A549 (cell line): ENCODE measurements at regions of chr2 and their contacts with region 1.

Region 1: DNA sequence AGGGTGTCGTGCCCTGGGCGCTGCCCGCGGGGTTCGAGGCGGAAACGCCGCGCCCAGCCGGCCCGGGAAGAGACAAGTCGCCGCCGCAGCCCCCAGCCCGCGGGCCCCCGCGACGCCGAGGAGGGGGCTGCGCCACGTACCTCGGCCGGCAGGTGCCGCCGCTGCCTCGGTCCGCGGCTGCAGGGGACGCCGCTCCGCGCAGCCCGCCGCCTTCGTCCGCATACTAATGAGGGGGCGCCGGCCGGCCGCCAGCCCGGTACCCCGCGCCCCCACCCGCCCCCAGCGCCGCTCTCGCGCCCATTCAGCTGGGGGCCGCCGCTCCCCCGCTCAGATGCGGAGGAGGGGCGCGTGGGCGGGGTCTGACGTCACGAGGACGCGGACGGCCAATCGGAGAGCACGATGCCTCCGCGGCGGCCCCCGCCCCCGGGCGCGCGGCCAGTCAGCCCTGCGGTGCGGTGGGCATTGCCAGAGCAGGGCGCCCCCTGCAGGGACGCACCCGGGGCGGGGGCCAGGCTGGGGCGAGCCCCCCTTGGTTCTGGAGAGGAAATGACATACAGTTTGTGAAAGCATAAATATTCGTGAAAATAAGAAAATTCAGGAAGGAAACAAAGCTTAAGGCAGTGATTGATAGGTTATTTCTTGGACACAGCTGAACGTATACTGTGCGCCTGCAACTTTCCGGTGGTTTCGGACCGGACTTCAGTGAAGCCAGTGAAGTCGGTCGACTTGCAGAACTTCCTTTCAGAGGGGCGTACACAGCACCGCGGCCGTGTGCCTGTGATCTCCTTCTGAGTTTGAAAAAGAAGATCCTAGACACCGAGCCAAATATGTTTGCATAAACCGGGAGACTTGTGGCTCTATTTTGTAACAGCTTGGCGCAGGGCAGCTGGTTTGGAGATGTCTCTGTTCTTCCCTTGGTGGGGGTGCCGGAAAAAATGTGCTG is at the start of gene ST3GAL5:
- DNase-seq: peak; percentile 81 to 92
- ATAC-seq: peak; percentile 74 to 84
- H3K4me3 ChIP-seq: peak within 1 kb of the TSS; percentile 77
- H3K27ac ChIP-seq: peak within 1 kb of the TSS; percentile 88 to 97
- H3K4me1 ChIP-seq: peaks cover 67% of the 10 kb centered on the region
- CTCF ChIP-seq: peak; percentile 97
- EP300 ChIP-seq: peak in 1 of 2 experiments; percentile 28; a peak in 1 of 5 replicates
- POLR2A ChIP-seq: peak; percentile 22
- RAD21 ChIP-seq: peak; percentile 55 to 81
- polyA plus RNA-seq, gene ST3GAL5: 115 and 119 TPM in 2 replicates

Region 2: GRCh38 chr2:85420536-85421259 is 468.3 kb before region 1 on chr2:
- CTCF ChIA-PET with region 1: no interaction called
- POLR2A ChIA-PET with region 1: no interaction called
- DNase-seq: peak; percentile 92 to 97
- ATAC-seq: peak; percentile 57 to 70
- H3K4me3 ChIP-seq: peak overlapping the region; percentile 16; the same call in 1 of the 3 replicates
- H3K27ac ChIP-seq: peak overlapping the region; percentile 96 to 98
- H3K4me1 ChIP-seq: peaks cover 44% of the 10 kb centered on the region
- CTCF ChIP-seq: peak; percentile 99
- EP300 ChIP-seq: no peak
- POLR2A ChIP-seq: no peak
- RAD21 ChIP-seq: peak; percentile 100

Region 3: DNA sequence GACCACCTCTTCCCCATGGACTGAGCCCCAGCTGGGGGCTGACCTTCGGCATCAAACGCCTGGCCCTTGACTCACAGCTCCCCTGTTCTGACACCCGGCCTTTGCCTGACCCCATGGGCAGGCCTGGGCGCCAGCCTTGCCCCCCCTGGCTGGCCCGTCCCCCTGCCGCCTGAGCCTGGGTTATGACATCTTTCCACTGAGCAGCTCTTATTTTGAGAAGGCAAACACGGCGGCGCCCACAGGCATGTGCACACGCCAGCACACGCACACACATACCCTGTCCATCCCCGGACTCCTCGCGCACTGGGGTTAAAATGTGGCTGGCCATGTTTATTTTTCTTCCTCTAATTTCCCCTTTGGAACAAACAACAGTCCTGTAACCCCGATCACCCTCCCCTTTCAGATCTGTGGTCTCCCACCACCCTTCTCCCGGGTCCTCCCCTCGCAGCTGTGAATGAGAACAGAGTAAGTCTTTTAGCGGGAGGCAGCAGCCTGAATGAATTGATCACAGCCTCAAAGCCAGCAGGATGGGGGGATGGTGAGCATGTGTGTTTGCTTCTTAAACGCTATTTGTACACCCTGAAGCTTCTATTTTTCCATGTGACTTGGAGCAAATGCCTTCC is 147.0 kb before region 1 on chr2:
- CTCF ChIA-PET with region 1: interaction called, 10 read pairs
- POLR2A ChIA-PET with region 1: no interaction called
- DNase-seq: peak; percentile 73 to 92
- ATAC-seq: peak; percentile 81 to 86
- H3K4me3 ChIP-seq: peak overlapping the region; percentile 21; the same call in 2 of the 3 replicates
- H3K27ac ChIP-seq: peak overlapping the region; percentile 93 to 97
- H3K4me1 ChIP-seq: peaks cover 60% of the 10 kb centered on the region
- CTCF ChIP-seq: no peak
- EP300 ChIP-seq: peak; percentile 45 to 89; a peak in 3 of 5 replicates
- POLR2A ChIP-seq: no peak
- RAD21 ChIP-seq: peak in 1 of 2 experiments; percentile 43; a peak in 3 of 5 replicates

Region 4: GRCh38 chr2:85799215-85799956 is 89.6 kb before region 1 on chr2:
- CTCF ChIA-PET with region 1: no interaction called
- POLR2A ChIA-PET with region 1: no interaction called
- DNase-seq: peak; percentile 59 to 77
- ATAC-seq: peak; percentile 73 to 82
- H3K4me3 ChIP-seq: no peak overlapping the region
- H3K27ac ChIP-seq: peak overlapping the region; percentile 51 to 76
- H3K4me1 ChIP-seq: peaks cover 29% of the 10 kb centered on the region
- CTCF ChIP-seq: no peak
- EP300 ChIP-seq: no peak
- POLR2A ChIP-seq: no peak
- RAD21 ChIP-seq: no peak

Region 5: DNA sequence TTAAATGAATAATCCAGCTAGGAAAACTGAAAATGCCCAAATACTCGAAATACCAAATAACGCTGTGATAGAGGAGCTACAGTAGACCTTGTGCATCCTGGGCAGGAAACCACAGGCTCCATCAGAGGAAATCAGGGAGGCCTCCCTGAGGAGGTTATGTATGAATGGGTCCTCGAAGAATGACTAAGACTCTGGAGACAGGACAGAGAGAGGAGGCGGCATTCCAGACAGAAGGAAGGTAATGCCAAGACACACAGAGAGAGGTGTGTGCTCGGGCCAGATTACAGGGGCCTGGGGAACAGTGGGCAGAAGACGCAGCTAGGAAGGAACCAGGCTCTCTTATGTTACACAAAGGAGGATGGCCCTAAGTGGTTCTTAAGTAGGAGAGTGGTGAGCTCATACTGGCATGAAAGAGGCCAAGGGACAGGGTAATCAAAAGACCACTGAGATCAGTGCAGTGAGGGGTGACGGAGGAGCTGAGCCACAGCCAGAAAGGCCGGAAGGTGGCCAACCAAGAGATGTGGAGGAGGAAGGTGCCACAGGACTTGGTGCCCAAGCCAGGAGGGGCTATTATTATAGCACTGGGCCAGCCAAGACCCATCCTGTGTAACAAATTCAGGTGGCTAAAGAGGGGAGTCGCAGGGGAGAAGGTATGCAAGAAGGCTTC is 10.1 kb before region 1 on chr2:
- CTCF ChIA-PET with region 1: interaction called, 19 read pairs
- POLR2A ChIA-PET with region 1: no interaction called
- DNase-seq: no peak
- ATAC-seq: peak; percentile 34 to 61; a peak in 3 of 6 replicates
- H3K4me3 ChIP-seq: no peak overlapping the region
- H3K27ac ChIP-seq: peak overlapping the region in 1 of 2 experiments; percentile 9; a peak in 1 of 6 replicates
- H3K4me1 ChIP-seq: peaks cover 33% of the 10 kb centered on the region
- CTCF ChIP-seq: no peak
- EP300 ChIP-seq: no peak
- POLR2A ChIP-seq: no peak
- RAD21 ChIP-seq: no peak

Region 6: DNA sequence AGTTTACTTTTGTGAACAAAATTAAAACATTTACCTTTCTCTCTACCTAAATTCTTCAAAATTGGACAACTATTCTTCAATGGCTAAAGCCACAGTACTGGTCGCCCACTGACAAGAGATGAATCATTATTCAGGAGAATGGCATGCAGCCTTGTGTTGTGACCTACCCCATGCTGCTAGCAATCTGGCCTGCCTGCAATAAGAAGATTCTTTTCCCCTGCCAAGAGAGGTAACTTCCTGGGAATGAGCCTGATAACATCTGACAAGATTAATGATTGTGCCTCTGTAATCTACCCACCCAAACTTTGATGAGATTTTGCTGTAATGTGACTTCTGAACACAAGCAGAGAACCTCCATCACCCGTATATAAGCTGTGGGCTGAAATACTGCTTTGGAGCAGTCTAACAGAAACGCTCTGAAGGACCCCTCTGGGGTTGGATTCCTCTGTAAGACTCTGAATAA is 46.8 kb after region 1 on chr2:
- CTCF ChIA-PET with region 1: interaction called, 74 read pairs
- POLR2A ChIA-PET with region 1: interaction called, 22 read pairs
- DNase-seq: peak; percentile 87 to 99
- ATAC-seq: peak; percentile 82
- H3K4me3 ChIP-seq: peak overlapping the region; percentile 29
- H3K27ac ChIP-seq: peak overlapping the region; percentile 89 to 99
- H3K4me1 ChIP-seq: peaks cover 68% of the 10 kb centered on the region
- CTCF ChIP-seq: no peak
- EP300 ChIP-seq: peak; percentile 93 to 95; a peak in 4 of 5 replicates
- POLR2A ChIP-seq: no peak
- RAD21 ChIP-seq: peak; percentile 54 to 56

Region 7: DNA sequence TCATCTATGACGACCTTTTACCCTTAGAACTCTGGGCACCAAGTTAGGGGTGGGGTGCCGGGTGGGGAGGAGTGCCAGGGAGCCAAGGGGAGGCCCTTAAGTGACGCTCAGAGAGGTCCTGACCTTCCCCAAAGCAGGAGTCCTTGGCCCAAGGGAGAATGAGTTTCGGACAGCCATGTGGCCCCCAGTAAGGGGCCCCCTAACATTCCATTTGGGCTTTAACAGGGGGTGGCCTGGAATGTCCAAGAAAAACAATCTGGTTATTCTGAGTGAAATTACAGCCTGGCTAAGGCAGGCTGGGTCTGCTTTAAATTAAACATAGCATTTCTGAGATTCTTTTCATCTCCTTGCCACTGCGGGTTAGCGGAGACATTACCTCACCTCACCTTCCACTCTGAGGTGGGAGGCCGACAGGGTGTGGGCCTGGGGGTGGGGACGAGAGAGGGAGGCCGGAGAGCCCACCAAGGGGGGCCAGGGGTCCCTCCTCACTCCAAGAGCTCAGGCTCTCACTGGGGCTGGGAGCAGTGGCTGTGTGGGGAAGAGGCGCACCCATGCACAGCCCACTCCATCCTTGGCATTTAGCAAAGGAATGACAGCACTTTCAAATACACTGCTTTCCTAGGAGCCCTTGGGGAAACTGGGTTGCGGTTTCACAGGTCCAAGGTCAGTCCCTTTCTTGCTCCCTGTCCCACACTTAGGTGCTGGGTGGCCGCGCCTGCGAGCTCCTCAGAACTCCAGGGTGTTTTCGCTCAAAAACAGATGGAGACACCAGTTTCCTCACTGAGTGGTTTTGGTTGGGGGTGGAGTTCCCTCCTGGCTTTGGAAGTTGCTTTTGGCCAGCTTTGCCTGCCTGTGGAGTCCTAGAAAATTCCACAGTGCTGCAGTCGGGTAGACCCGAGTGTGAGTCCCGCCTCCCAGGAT is 109.4 kb after region 1 on chr2:
- CTCF ChIA-PET with region 1: interaction called, 18 read pairs
- POLR2A ChIA-PET with region 1: no interaction called
- DNase-seq: no peak
- ATAC-seq: peak in 1 of 2 experiments; percentile 54; a peak in 3 of 6 replicates
- H3K4me3 ChIP-seq: no peak overlapping the region
- H3K27ac ChIP-seq: peak overlapping the region in 1 of 2 experiments; percentile 60; a peak in 3 of 6 replicates
- H3K4me1 ChIP-seq: peaks cover 40% of the 10 kb centered on the region
- CTCF ChIP-seq: no peak
- EP300 ChIP-seq: no peak
- POLR2A ChIP-seq: no peak
- RAD21 ChIP-seq: no peak

Region 8: DNA sequence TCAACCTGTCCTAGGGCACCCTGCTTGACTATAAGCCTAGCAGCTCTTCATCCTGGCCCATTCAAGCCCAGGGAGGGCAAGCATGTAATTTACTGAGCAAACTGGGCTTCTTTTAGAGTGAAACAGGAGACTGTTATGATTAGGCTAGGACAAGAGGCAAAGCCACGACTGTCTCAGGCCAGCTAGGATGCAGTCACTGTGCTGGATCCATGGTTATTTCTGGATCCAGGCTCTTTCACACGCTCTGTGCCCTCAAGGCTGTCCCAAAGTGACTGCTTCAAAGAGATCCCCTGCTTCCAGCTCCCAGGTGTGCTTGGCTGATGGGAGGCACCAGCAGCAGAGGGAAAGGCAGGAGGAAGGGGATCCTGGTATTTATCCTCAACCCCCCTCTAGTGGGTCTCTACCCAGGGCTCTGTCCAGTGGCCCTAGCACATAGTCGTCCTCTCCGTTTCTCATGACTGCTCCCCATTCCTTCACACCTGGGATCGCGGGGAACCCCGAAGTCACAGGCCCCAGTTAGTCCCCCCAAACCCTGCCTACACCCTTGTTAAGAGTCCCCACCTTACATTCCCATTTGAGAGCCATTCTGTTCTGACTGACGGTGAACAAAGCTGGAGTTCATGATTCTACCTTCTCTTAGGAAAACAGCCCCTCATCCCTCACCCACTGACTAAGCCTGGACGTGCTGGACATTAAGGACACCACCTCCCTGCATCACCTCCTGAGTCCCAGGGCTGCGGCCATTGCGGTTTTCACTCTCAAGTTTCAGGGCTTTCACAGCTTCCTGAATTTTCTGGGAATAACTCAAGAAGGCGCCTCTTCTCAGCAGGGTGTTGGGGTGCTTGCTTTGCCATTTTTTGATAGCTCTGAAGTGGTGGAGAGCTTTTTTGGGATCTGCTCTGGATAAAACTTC is 153.6 kb after region 1 on chr2:
- CTCF ChIA-PET with region 1: interaction called, 36 read pairs
- POLR2A ChIA-PET with region 1: no interaction called
- DNase-seq: no peak
- ATAC-seq: no peak
- H3K4me3 ChIP-seq: no peak overlapping the region
- H3K27ac ChIP-seq: no peak overlapping the region
- H3K4me1 ChIP-seq: no peaks in the 10 kb centered on the region; the same call in 2 of the 3 replicates
- CTCF ChIP-seq: no peak
- EP300 ChIP-seq: no peak
- POLR2A ChIP-seq: no peak
- RAD21 ChIP-seq: no peak

Region 9: DNA sequence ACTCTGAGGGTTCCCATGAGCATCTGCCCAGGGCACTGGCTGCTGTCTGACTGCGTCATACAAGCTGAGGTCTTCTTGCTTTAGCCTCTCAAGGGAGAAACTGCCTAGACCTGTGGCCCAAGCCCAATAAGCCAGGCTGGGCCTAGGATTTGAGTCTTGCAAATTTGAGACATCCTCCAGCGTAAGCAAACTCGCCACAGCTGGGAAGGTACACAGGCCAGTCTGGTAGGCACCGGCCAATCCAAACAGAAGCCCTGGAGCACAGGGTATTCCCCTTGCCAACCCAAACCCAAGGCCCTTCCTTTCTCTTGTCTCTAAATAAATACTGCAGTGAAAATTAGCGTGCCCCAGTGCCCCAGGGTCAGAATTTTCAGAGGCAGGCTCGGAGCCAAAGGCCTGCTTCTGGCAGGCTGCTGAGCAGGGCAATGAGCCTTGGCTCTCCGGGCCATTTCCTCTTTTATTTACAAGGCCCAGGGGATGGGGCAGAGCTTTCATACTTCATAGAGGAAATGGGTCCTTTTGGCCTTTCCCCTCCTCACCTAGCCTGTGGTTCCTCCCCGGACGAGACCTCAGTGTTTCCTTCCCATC is 183.4 kb after region 1 on chr2:
- CTCF ChIA-PET with region 1: interaction called, 238 read pairs
- POLR2A ChIA-PET with region 1: no interaction called
- DNase-seq: peak in 1 of 2 experiments; percentile 55
- ATAC-seq: peak; percentile 10 to 71; a peak in 4 of 6 replicates
- H3K4me3 ChIP-seq: no peak overlapping the region
- H3K27ac ChIP-seq: peak overlapping the region; percentile 7 to 72; a peak in 4 of 6 replicates
- H3K4me1 ChIP-seq: peaks cover 41% of the 10 kb centered on the region
- CTCF ChIP-seq: no peak
- EP300 ChIP-seq: no peak
- POLR2A ChIP-seq: no peak
- RAD21 ChIP-seq: no peak